Caco-2 (cell line): ENCODE measurements at regions of chr12 and their contacts with region 1.

Region 1: DNA sequence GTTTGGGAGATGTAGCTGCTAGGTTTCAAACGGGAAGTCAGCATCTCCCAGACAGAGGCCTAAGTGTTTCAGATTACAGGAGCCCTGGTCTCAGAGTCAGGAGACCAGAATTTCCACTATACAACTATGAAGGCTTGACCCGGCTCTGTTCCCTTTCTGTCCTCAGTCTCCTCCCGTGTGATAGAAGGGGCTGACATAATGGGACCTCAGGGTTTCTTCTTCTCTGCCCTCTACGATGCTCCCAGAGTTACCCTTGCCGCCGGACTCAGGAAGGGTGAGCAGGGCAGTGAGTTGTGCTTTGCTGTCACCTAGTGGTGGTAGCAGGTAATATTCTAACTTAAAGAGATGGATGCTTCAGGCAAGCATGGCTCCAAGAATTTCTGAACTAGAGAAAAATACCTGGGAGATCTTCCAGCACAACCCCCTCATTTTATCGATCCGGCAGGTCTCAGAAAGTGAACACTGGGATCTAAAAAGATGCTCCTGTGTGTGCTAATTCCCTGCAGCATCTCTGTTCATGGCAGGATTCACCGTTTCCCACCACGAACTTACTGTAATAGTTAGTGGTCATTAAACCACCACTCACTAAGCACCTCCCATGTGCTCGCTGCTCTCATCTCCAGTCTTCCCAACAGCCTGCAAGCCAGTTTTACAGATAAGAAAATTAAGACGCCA is 84.4 kb downstream of the VWF start:
- DNase-seq: peak; percentile 75 to 82
- H3K4me3 ChIP-seq: no peak overlapping the region
- H3K4me3 Mint-ChIP-seq: no peak overlapping the region
- H3K27ac Mint-ChIP-seq: no peak overlapping the region
- H3K4me1 ChIP-seq: no peaks in the 10 kb centered on the region
- H3K4me1 Mint-ChIP-seq: no peaks in the 10 kb centered on the region
- H3K27me3 ChIP-seq: no peaks in the 10 kb centered on the region
- H3K27me3 Mint-ChIP-seq: peaks cover 6% of the 10 kb centered on the region
- CTCF ChIP-seq: peak; percentile 97 to 99

Region 2: DNA sequence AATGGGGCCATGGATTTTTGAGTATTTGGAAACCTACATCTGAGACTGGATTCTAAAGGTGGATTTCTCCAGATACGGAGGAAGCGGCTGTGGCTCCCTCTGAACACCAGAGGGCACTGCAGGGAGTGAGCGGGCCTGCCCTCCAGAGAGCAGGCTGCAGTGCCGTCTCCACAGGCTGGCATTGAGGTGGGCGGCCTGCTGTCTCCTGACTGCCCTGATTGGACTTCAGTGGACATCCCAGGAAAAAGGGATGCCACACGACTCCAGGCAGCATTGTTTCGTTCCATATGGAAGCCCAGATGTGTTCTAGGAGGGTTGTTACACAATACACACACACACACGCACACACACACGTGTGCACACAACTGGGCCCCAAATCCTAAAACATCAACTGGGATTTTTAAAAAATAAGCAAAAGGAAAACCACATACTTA is 74.1 kb before region 1 on chr12:
- CTCF ChIA-PET with region 1: interaction called, 5 read pairs
- POLR2A ChIA-PET with region 1: no interaction called
- intact Hi-C with region 1: loop called (anchors 1 kb)
- DNase-seq: peak in 1 of 2 experiments; percentile 76
- H3K4me3 ChIP-seq: no peak overlapping the region
- H3K4me3 Mint-ChIP-seq: no peak overlapping the region
- H3K27ac Mint-ChIP-seq: no peak overlapping the region
- H3K4me1 ChIP-seq: no peaks in the 10 kb centered on the region
- H3K4me1 Mint-ChIP-seq: no peaks in the 10 kb centered on the region
- H3K27me3 ChIP-seq: no peaks in the 10 kb centered on the region; the same call in 1 of the 2 replicates
- H3K27me3 Mint-ChIP-seq: peaks cover 20% of the 10 kb centered on the region
- CTCF ChIP-seq: peak; percentile 90 to 96

Region 3: DNA sequence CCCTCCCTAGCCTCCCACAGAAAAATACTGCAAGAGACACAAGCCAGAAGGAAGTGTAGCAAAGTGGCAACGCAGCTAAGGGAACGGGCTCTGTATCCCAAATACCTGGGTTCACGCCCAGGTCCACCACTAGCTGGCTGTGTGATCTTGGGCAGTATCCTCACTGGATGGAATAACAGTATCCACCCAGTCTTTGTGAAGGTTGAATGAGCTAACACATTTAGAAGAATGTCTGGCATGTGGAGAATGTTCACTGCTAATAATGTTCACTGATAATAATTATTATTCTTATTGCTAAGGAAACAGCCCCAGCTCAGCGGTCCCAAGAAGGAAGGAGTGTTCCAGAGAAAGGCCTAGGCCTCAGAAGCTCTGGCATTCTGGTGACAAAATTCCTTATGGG is 13.5 kb after region 1 on chr12:
- CTCF ChIA-PET with region 1: interaction called, 13 read pairs
- POLR2A ChIA-PET with region 1: no interaction called
- intact Hi-C with region 1: no loop called
- DNase-seq: peak; percentile 70 to 73
- H3K4me3 ChIP-seq: no peak overlapping the region
- H3K4me3 Mint-ChIP-seq: no peak overlapping the region
- H3K27ac Mint-ChIP-seq: peak overlapping the region; percentile 61
- H3K4me1 ChIP-seq: peaks cover 24% of the 10 kb centered on the region
- H3K4me1 Mint-ChIP-seq: peaks cover 11% of the 10 kb centered on the region
- H3K27me3 ChIP-seq: no peaks in the 10 kb centered on the region
- H3K27me3 Mint-ChIP-seq: no peaks in the 10 kb centered on the region
- CTCF ChIP-seq: peak in 1 of 2 experiments; percentile 25

Region 4: GRCh38 chr12:6104027-6104426 is 64.0 kb after region 1 on chr12:
- CTCF ChIA-PET with region 1: no interaction called
- POLR2A ChIA-PET with region 1: no interaction called
- intact Hi-C with region 1: no loop called
- DNase-seq: no peak
- H3K4me3 ChIP-seq: no peak overlapping the region
- H3K4me3 Mint-ChIP-seq: no peak overlapping the region
- H3K27ac Mint-ChIP-seq: no peak overlapping the region
- H3K4me1 ChIP-seq: no peaks in the 10 kb centered on the region
- H3K4me1 Mint-ChIP-seq: no peaks in the 10 kb centered on the region
- H3K27me3 ChIP-seq: no peaks in the 10 kb centered on the region
- H3K27me3 Mint-ChIP-seq: no peaks in the 10 kb centered on the region
- CTCF ChIP-seq: no peak

Region 5: GRCh38 chr12:6116175-6117021 is 76.4 kb after region 1 on chr12:
- CTCF ChIA-PET with region 1: no interaction called
- POLR2A ChIA-PET with region 1: no interaction called
- intact Hi-C with region 1: no loop called
- DNase-seq: no peak
- H3K4me3 ChIP-seq: no peak overlapping the region
- H3K4me3 Mint-ChIP-seq: no peak overlapping the region
- H3K27ac Mint-ChIP-seq: peak overlapping the region; percentile 33
- H3K4me1 ChIP-seq: no peaks in the 10 kb centered on the region; the same call in 1 of the 2 replicates
- H3K4me1 Mint-ChIP-seq: no peaks in the 10 kb centered on the region
- H3K27me3 ChIP-seq: no peaks in the 10 kb centered on the region
- H3K27me3 Mint-ChIP-seq: no peaks in the 10 kb centered on the region
- CTCF ChIP-seq: no peak